Activated CD4-positive, alpha-beta memory T cell treated with anti-CD3 and anti-CD28 coated beads for 36 hours (primary cell): ENCODE measurements at regions of chr19 and their contacts with region 1.

Region 1: GRCh38 chr19:10717356-10718204 is at the start of gene DNM2:
- DNase-seq: peak; percentile 99
- H3K4me3 Mint-ChIP-seq: peak within 1 kb of the TSS; percentile 95
- H3K27ac Mint-ChIP-seq: peak within 1 kb of the TSS; percentile 85
- H3K4me1 Mint-ChIP-seq: peaks cover 30% of the 10 kb centered on the region
- H3K27me3 Mint-ChIP-seq: no peaks in the 10 kb centered on the region
- total RNA-seq, gene DNM2: 171 to 173 TPM

Region 2: GRCh38 chr19:10612491-10613119 is 105.0 kb before region 1 on chr19:
- CTCF ChIA-PET with region 1: no interaction called
- POLR2A ChIA-PET with region 1: no interaction called
- intact Hi-C with region 1: no loop called
- DNase-seq: no peak
- H3K4me3 Mint-ChIP-seq: no peak overlapping the region
- H3K27ac Mint-ChIP-seq: no peak overlapping the region
- H3K4me1 Mint-ChIP-seq: peaks cover 24% of the 10 kb centered on the region
- H3K27me3 Mint-ChIP-seq: no peaks in the 10 kb centered on the region

Region 3: DNA sequence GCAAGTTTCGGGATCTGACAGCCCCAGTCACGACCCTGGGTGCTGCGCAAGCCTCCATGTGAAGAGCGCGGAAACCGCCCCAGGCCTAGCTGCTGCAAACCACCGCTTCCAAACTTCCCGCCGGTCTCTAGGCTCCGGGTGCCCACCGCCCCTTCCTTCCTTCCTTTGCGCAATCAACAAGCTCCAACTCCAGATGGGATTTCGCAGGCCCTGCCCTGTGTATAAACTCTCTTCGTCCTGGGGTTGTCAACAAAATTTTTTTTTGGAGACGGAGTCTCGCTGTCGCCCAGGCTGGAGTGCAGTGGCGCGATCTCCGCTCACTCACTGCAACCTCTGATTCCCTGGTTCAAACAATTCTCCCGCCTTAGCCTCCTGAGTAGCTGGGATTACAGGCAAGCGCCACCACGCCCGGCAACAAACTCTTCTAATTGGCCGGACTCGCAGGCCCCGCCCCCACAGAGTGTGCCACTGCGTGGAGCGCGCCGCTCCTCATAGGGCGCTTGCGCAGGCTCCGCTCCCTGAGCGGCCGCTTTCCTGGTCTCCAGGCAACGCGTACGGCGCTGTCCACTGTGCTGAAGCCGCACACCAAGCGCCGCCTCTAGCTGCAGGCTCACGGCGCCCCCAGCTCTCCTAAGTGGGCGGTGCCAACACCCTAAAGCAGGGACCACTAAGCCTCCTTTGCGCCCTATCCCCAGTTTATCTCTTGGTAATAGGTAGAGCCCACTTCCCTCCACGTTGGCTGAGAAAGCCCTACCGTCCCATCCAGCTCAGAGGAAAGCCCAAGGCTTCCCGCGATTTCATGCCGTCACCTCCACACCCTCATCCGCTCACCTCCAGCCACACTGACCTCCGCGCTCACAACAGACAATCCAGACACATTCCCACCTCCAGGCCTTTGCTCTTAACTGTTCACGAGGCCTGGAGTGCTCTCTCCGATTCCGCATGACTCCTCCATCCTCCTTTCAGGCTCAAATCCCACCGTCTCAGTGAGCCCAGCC is 21.9 kb before region 1 on chr19:
- CTCF ChIA-PET with region 1: interaction called, 41 read pairs
- POLR2A ChIA-PET with region 1: interaction called, 13 read pairs
- intact Hi-C with region 1: no loop called
- DNase-seq: peak; percentile 94
- H3K4me3 Mint-ChIP-seq: peak overlapping the region; percentile 59
- H3K27ac Mint-ChIP-seq: no peak overlapping the region
- H3K4me1 Mint-ChIP-seq: peaks cover 15% of the 10 kb centered on the region
- H3K27me3 Mint-ChIP-seq: peaks cover 13% of the 10 kb centered on the region

Region 4: GRCh38 chr19:10751109-10751953 is 33.8 kb after region 1 on chr19:
- CTCF ChIA-PET with region 1: interaction called, 10 read pairs
- POLR2A ChIA-PET with region 1: no interaction called
- intact Hi-C with region 1: no loop called
- DNase-seq: no peak
- H3K4me3 Mint-ChIP-seq: no peak overlapping the region
- H3K27ac Mint-ChIP-seq: peak overlapping the region; percentile 77
- H3K4me1 Mint-ChIP-seq: peaks cover 71% of the 10 kb centered on the region
- H3K27me3 Mint-ChIP-seq: no peaks in the 10 kb centered on the region

Region 5: GRCh38 chr19:10784257-10784656 is 66.7 kb after region 1 on chr19:
- CTCF ChIA-PET with region 1: no interaction called
- POLR2A ChIA-PET with region 1: no interaction called
- intact Hi-C with region 1: no loop called
- DNase-seq: no peak
- H3K4me3 Mint-ChIP-seq: no peak overlapping the region
- H3K27ac Mint-ChIP-seq: no peak overlapping the region
- H3K4me1 Mint-ChIP-seq: no peaks in the 10 kb centered on the region
- H3K27me3 Mint-ChIP-seq: no peaks in the 10 kb centered on the region

Region 6: DNA sequence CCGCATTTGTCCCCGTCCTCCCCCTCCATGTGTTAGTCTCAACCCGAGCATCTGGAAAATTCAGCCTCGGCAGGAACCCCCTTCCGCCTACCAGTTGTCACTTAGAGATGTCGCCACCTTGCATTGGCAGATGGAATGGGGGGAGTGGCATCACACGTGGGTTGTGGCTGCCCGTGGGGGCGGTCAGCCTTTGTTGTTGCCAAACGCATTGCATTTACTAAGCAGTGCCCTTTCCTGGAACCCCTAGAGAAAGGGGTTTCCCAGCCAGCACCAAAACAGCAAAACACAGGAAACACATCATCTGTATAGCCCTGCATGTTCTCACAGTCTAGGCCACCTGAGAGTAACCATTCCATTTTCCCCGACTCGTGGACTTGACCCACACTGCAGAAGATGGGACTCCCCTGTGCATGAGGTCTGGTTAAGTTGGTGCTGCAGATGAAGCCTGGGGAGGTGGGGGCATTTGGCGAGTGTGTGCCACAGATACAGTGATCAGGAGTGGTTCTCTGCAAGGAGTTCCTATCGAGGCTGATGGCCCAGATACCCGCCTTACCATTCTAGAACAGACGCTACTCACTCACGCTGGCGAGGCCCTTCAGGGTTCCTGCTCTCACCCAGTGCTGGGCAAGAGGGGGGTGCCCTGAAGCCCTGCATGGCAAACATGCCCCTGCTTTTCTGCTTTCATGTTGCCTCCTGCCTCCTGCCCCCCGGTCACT is 80.1 kb after region 1 on chr19:
- CTCF ChIA-PET with region 1: interaction called, 8 read pairs
- POLR2A ChIA-PET with region 1: interaction called, 3 read pairs
- intact Hi-C with region 1: loop called (anchors 1 kb)
- DNase-seq: peak; percentile 98
- H3K4me3 Mint-ChIP-seq: peak overlapping the region; percentile 76
- H3K27ac Mint-ChIP-seq: peak overlapping the region; percentile 99
- H3K4me1 Mint-ChIP-seq: peaks cover 32% of the 10 kb centered on the region
- H3K27me3 Mint-ChIP-seq: no peaks in the 10 kb centered on the region

Region 7: GRCh38 chr19:10828981-10829821 is 111.6 kb after region 1 on chr19:
- CTCF ChIA-PET with region 1: interaction called, 12 read pairs
- POLR2A ChIA-PET with region 1: no interaction called
- intact Hi-C with region 1: no loop called
- DNase-seq: no peak
- H3K4me3 Mint-ChIP-seq: no peak overlapping the region
- H3K27ac Mint-ChIP-seq: no peak overlapping the region
- H3K4me1 Mint-ChIP-seq: no peaks in the 10 kb centered on the region
- H3K27me3 Mint-ChIP-seq: no peaks in the 10 kb centered on the region

Region 8: DNA sequence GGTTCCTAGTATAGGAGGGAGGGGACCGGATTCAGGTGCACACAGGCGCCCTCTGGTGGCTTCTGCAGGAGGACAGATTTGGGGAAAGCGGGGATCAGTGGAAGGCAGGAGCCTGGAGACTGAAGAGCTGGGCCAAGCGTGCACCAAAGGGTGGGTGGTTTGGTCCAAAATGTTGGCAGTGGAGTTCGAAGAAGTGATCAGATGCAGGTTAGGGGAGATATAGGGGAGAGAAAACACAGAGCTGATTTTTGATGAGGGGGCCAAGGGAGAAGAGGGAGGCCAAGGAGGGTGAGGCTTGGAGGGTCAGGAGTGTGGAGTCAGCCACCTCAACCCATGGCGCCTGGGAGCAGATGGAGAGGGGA is 146.9 kb after region 1 on chr19:
- CTCF ChIA-PET with region 1: interaction called, 208 read pairs
- POLR2A ChIA-PET with region 1: interaction called, 7 read pairs
- intact Hi-C with region 1: loop called (anchors 1 kb)
- DNase-seq: peak; percentile 91
- H3K4me3 Mint-ChIP-seq: no peak overlapping the region
- H3K27ac Mint-ChIP-seq: no peak overlapping the region
- H3K4me1 Mint-ChIP-seq: peaks cover 13% of the 10 kb centered on the region
- H3K27me3 Mint-ChIP-seq: no peaks in the 10 kb centered on the region

Region 9: GRCh38 chr19:11090054-11090900 is 372.7 kb after region 1 on chr19:
- CTCF ChIA-PET with region 1: no interaction called
- POLR2A ChIA-PET with region 1: no interaction called
- intact Hi-C with region 1: loop called (anchors 5 kb)
- DNase-seq: peak; percentile 99
- H3K4me3 Mint-ChIP-seq: peak overlapping the region; percentile 95
- H3K27ac Mint-ChIP-seq: peak overlapping the region; percentile 98
- H3K4me1 Mint-ChIP-seq: peaks cover 45% of the 10 kb centered on the region
- H3K27me3 Mint-ChIP-seq: no peaks in the 10 kb centered on the region